ENCODE measurements at regions of chr2 and their contacts with region 1.

Region 1: GRCh38 chr2:50395510-50396297 is 636.2 kb downstream of the NRXN1 start:
- ATAC-seq: peak in 4 of 8 experiments; percentile 12 to 50 (median 24)
- H3K4me3 ChIP-seq: no peak overlapping the region
- H3K27ac ChIP-seq: no peak overlapping the region
- H3K4me1 ChIP-seq: peaks cover 4 to 12% of the 10 kb centered on the region in 2 donors

Region 2: DNA sequence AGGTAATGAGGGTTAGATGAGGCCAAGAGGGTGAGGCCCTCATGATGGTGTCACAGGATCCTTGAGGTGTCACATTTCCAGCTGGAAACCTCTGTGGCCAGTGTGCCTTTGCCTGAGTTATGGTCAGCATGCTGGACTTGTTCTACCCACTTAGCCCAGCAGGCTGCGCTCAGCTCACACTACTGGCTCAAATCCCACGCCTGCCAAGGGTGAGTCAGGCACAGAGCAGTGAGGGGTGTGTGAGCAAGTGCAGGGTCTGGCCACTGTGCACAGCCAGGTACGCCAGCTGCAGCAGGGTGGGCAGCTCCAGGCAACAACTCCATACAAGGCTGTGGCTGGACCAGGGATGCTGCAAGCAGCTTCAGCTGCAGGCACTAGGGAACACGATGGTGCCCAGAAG is 624.8 kb before region 1 on chr2:
- in situ Hi-C with region 1: loop called in 1 of 9 experiments (anchors 10 kb)
- ATAC-seq: peak; percentile 56 to 100 (median 82)
- H3K4me3 ChIP-seq: no peak overlapping the region
- H3K27ac ChIP-seq: no peak overlapping the region
- H3K4me1 ChIP-seq: peaks cover 0 to 2% of the 10 kb centered on the region in 2 donors